ENCODE measurements at regions of chr2 and their contacts with region 1.

Region 1: DNA sequence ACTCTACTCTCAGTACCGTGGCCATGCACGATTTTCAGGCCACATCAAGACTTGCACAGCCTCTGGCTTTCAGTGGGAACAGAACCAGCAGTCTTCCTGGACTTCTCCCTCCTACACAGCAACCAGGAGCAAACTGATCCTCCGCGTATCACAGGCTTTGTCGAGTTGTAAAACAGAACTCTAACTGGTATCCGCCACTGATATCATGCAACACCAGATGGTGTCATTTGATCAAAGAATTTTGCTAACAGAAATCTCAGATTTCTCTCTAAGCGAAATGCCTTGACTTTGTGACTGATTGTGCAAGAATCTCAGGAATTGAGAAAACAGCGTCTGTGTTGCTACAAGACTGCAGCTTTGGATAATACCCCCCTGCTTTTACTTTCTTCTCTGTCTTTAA is 85.7 kb downstream of the COPS8 start:
- DNase-seq: peak; percentile 83
- H3K4me3 ChIP-seq: peak overlapping the region in 3 of 4 donors; percentile 2 to 21 (median 9)
- H3K27ac ChIP-seq: peak overlapping the region; percentile 64 to 78 (median 74)
- H3K4me1 ChIP-seq: peaks cover 0 to 24% (median 21%) of the 10 kb centered on the region in 4 donors
- H3K27me3 ChIP-seq: no peaks in the 10 kb centered on the region
- CTCF ChIP-seq: peak in 1 of 4 experiments; percentile 13
- EP300 ChIP-seq: no peak
- POLR2A ChIP-seq: no peak

Region 2: DNA sequence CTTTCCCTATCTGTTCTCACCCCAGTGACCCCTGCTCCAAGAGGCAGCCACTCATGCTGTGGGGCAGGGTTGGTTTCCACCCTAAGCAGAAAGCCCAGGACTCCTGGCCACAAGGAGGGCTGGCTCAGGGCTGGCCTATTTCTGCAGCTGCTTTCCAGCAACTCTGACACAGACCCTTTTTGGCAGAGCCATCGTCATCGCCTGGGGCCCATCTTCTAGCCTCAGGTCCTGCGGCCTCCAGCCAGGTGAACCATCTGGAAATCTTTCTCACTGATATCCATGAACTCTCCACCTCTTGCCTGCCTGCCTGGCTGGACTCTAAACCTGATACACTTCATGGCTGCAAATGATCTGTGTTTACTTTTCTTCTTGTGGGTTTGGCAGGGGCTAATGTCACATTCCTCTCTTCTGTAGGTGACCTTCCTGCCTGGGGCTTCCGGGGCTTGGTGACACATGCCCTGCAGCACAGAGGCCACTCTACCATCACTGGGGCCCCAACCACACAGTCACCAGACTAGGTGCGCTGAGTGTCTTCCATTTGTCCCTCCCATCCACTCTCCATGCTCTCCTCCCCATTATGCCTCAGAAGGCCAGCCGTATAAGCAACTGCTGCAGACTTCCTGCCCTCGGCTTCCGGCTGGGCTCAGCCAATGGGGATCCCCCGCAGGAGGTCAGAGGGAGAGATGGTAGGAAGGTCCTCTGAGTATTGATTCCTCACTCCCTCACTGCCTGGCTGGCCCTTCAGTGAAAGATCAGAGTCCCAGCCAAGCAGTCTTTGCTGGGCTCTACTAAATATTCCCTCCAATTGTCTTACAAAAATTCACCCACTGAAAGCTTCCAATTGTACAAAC is 95.4 kb before region 1 on chr2:
- intact Hi-C with region 1: no loop called
- DNase-seq: no peak
- H3K4me3 ChIP-seq: no peak overlapping the region
- H3K27ac ChIP-seq: no peak overlapping the region
- H3K4me1 ChIP-seq: no peaks in the 10 kb centered on the region
- H3K27me3 ChIP-seq: no peaks in the 10 kb centered on the region
- CTCF ChIP-seq: no peak
- EP300 ChIP-seq: no peak
- POLR2A ChIP-seq: no peak

Region 3: GRCh38 chr2:237298151-237299118 is 127.0 kb after region 1 on chr2:
- intact Hi-C with region 1: loop called (anchors 5 kb)
- DNase-seq: no peak
- H3K4me3 ChIP-seq: no peak overlapping the region
- H3K27ac ChIP-seq: peak overlapping the region; percentile 11 to 90 (median 86)
- H3K4me1 ChIP-seq: peaks cover 0 to 76% (median 58%) of the 10 kb centered on the region in 4 donors
- H3K27me3 ChIP-seq: no peaks in the 10 kb centered on the region
- CTCF ChIP-seq: no peak
- EP300 ChIP-seq: peak in 3 of 4 donors; percentile 11 to 60 (median 44)
- POLR2A ChIP-seq: no peak

Region 4: GRCh38 chr2:237408335-237409000 is 237.1 kb after region 1 on chr2:
- intact Hi-C with region 1: loop called (anchors 2 kb)
- DNase-seq: no peak
- H3K4me3 ChIP-seq: peak overlapping the region in 3 of 4 donors; percentile 6 to 81 (median 66)
- H3K27ac ChIP-seq: peak overlapping the region; percentile 84 to 96 (median 94)
- H3K4me1 ChIP-seq: peaks cover 0 to 74% (median 57%) of the 10 kb centered on the region in 4 donors
- H3K27me3 ChIP-seq: no peaks in the 10 kb centered on the region
- CTCF ChIP-seq: no peak
- EP300 ChIP-seq: no peak
- POLR2A ChIP-seq: no peak